Right ventricle myocardium inferior (tissue), 1 donor: ENCODE measurements at regions of chr12 and their contacts with region 1.

Region 1: DNA sequence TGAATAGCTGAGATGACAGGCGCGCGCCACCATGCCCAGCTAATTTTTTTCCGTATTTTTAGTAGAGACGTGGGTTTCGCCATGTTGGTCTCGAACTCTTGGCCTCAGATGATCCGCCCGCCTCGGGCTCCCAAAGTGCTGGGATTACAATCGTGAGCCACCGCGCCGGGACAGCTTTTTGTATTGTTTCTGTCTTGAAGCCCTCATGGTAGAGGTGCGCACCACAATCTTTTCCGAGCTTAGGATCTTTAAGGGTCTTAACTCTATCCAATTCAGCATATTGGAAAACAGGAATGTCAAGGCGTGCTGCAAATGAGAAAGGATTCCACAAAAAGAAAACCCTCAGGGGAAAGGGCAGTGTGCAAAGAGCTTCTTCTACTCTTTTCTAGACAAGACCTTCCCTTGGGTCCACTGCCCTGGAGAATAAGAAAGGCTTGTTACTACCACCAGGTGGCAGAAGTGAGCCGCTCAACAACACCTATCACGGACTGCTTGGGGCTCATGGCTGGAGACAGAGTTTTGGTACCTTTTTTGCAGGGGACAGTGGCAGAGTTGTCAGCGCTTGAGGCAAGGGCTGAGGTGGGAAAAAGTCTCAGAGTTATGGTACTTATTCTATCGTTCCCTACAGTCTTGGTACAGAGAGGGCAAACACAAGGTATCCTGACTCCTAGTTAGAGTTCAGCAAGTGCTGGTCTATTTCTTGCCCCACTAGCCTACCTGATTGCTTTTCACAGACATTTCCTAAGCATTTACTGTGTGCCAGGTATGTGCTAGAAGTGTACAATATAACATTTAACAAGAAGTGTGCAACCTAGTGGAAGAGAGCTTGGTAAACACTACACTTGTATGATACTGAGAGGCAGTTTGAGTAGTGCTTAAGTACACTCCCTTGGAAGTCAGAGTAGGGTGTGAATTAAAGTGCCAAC is 16.4 kb upstream of the SP7 start:
- DNase-seq: peak; percentile 84
- ATAC-seq: peak; percentile 95

Region 2: GRCh38 chr12:53424626-53425514 is 72.3 kb after region 1 on chr12:
- intact Hi-C with region 1: loop called (anchors 1 kb)
- DNase-seq: no peak
- ATAC-seq: no peak

Region 3: DNA sequence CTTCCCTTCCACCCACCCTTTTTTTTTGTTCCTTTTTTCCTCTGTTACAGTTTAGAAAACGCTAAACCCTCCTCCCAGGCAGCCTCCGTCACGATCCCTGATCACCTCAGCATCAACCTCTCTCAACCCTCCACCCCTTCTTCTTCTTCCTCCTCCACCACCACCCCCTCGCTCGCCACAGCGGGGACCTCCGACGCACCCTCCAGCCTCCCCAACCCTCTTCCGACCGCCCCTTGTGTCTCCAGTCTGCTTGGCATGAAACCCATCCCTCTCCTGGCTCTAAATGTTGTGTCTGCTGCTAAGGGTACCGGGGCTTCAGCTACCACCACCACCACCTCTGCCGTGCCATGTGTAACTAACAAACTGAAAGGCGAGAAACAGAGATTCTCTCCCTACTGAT is 122.2 kb after region 1 on chr12:
- intact Hi-C with region 1: no loop called
- DNase-seq: no peak
- ATAC-seq: no peak

Region 4: GRCh38 chr12:53508534-53509199 is 156.1 kb after region 1 on chr12:
- intact Hi-C with region 1: loop called (anchors 1 kb)
- DNase-seq: peak; percentile 89
- ATAC-seq: peak; percentile 81